ENCODE measurements at regions of chr1 and their contacts with region 1.

Region 1: DNA sequence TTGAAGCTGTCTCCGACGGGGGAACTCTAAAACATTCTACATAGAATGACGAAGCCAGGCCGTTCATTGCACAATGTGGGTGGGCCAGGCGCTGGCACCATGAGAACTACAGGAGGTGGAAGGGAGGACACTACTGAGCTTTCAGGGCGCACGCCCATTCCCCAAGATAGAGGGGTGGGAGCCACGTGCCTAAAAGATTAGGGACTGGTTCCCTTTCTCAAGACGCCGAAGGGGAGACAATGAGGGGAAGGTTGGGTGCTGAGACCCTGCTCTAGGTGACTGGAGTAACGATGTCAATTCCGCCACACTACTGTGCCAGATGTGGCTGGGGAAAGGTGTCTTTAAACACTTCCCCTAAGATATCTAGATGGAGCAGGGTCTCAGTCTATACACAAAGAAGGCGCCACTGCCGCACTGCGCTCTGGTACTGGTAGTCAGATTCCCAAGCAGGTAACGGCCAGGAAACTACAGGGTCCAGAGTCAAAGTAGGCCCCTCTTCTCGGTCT is 782 bp downstream of the CSDE1 start:
- DNase-seq: peak in 7 of 35 experiments; percentile 3 to 16 (median 8)
- ATAC-seq: no peak
- H3K4me3 ChIP-seq: peak overlapping the region; percentile 99 to 100
- H3K4me3 Mint-ChIP-seq: peak overlapping the region; percentile 99 to 100 (median 99)
- H3K27ac ChIP-seq: peak overlapping the region; percentile 100
- H3K27ac Mint-ChIP-seq: peak overlapping the region; percentile 99
- H3K4me1 ChIP-seq: peaks cover 34 to 46% of the 10 kb centered on the region in 2 experiments
- H3K4me1 Mint-ChIP-seq: peaks cover 56 to 63% (median 61%) of the 10 kb centered on the region in 3 donors
- H3K27me3 ChIP-seq: no peaks in the 10 kb centered on the region
- H3K27me3 Mint-ChIP-seq: no peaks in the 10 kb centered on the region

Region 2: DNA sequence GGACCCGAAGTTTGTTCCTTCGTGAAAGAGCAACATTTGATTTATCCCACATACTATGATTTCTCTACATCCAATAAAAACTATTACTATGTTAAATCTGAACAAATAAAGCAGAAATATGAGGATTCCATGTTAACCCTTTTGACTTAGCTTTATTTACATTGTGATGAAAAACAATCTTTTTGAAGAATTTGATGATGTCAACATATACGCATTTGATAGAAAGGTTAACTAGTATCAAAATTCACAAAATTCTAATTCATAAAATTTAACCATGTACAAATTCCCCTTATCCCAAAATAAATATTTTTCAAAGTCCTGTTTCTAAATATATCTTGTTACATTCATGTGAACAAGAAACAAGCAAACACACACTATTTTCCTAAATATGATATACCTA is 320.2 kb before region 1 on chr1:
- CTCF ChIA-PET with region 1: no interaction called
- POLR2A ChIA-PET with region 1: interaction called in 1 of 2 experiments, 16 read pairs
- DNase-seq: no peak
- ATAC-seq: no peak
- H3K4me3 ChIP-seq: no peak overlapping the region
- H3K4me3 Mint-ChIP-seq: no peak overlapping the region
- H3K27ac ChIP-seq: no peak overlapping the region
- H3K27ac Mint-ChIP-seq: no peak overlapping the region
- H3K4me1 ChIP-seq: no peaks in the 10 kb centered on the region
- H3K4me1 Mint-ChIP-seq: peaks cover 19 to 33% (median 23%) of the 10 kb centered on the region in 3 donors
- H3K27me3 ChIP-seq: no peaks in the 10 kb centered on the region
- H3K27me3 Mint-ChIP-seq: no peaks in the 10 kb centered on the region